ENCODE measurements at regions of chr6 and their contacts with region 1.

Region 1: GRCh38 chr6:110185879-110186278 is 5.7 kb downstream of the CDC40 start:
- DNase-seq: no peak
- ATAC-seq: no peak
- H3K4me3 ChIP-seq: no peak overlapping the region
- H3K27ac ChIP-seq: no peak overlapping the region
- H3K4me1 ChIP-seq: peaks cover 0 to 12% of the 10 kb centered on the region in 2 experiments; a peak in 3 of 5 replicates
- H3K27me3 ChIP-seq: no peaks in the 10 kb centered on the region
- CTCF ChIP-seq: no peak
- EP300 ChIP-seq: no peak
- POLR2A ChIP-seq: no peak
- RAD21 ChIP-seq: no peak

Region 2: GRCh38 chr6:110221738-110222137 is 35.9 kb after region 1 on chr6:
- CTCF ChIA-PET with region 1: no interaction called
- POLR2A ChIA-PET with region 1: no interaction called
- in situ Hi-C with region 1: loop called (anchors 5 kb)
- intact Hi-C with region 1: no loop called
- DNase-seq: no peak
- ATAC-seq: no peak
- H3K4me3 ChIP-seq: no peak overlapping the region
- H3K27ac ChIP-seq: no peak overlapping the region
- H3K4me1 ChIP-seq: no peaks in the 10 kb centered on the region
- H3K27me3 ChIP-seq: no peaks in the 10 kb centered on the region
- CTCF ChIP-seq: no peak
- EP300 ChIP-seq: no peak
- POLR2A ChIP-seq: no peak
- RAD21 ChIP-seq: no peak

Measured in K562 (cell line).